BJ (cell line): ENCODE measurements at regions of chr1 and their contacts with region 1.

Region 1: GRCh38 chr1:14778898-14779865 is 180.7 kb downstream of the KAZN start:
- DNase-seq: no peak
- H3K4me3 ChIP-seq: no peak overlapping the region
- H3K27me3 ChIP-seq: no peaks in the 10 kb centered on the region
- CTCF ChIP-seq: peak; percentile 75

Region 2: DNA sequence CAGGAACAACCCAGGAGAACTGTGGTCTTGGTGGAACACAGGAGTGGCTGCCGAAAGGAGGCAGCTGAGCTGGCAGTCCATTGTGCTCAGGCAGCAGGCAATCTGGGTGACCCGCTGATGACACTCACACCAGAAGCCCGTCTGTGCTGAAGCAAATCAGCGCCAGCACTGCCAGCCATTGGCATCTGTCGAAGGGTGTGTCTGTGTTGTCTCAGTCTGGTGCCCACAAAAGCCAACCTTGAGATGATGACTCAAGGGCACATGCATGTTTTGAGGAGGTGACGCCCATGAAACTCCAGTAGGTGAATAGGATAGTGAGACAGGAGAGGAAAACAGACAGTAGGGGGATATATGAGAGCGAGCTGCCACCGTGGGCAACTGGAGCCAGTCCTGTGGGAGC is 13.4 kb before region 1 on chr1:
- CTCF ChIA-PET with region 1: interaction called, 11 read pairs
- POLR2A ChIA-PET with region 1: no interaction called
- DNase-seq: no peak
- H3K4me3 ChIP-seq: no peak overlapping the region
- H3K27me3 ChIP-seq: no peaks in the 10 kb centered on the region
- CTCF ChIP-seq: no peak

Region 3: DNA sequence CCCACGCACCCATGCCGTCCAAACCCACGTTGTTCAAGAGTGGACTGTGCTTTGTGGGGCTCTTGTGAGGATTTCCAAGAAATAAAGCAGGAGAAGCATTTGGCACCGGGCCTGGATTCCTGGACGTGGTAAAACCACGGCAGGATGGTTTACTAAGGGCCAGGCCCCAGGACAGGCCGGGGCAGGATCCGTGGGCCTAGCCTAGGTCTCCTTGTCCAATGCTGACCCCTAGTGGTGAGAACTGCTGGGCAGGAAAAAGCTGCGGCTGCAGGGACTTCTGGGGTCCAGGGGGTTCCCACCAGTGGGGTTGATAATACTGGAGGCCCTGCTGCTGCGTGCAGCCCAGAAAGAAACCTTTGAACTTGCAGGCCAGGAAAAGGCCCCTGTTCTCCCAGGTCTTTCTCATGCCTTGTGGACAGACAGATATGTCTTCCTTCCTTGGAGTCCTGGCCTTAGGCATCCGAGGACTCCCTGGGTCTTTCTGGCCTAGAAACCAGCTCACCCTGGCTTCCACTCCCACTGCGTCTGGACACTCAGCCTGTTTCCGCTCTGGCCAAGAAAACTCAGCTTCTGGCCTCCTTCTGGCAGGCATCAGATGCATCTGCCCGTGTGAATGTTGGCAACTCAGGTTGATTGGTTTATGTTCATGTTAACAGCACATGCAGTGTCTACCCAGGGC is 267.4 kb after region 1 on chr1:
- CTCF ChIA-PET with region 1: interaction called, 19 read pairs
- POLR2A ChIA-PET with region 1: no interaction called
- DNase-seq: peak; percentile 11
- H3K4me3 ChIP-seq: no peak overlapping the region
- H3K27me3 ChIP-seq: no peaks in the 10 kb centered on the region
- CTCF ChIP-seq: peak; percentile 98